Endothelial cell of umbilical vein (primary cell): ENCODE measurements at regions of chr12 and their contacts with region 1.

Region 1: DNA sequence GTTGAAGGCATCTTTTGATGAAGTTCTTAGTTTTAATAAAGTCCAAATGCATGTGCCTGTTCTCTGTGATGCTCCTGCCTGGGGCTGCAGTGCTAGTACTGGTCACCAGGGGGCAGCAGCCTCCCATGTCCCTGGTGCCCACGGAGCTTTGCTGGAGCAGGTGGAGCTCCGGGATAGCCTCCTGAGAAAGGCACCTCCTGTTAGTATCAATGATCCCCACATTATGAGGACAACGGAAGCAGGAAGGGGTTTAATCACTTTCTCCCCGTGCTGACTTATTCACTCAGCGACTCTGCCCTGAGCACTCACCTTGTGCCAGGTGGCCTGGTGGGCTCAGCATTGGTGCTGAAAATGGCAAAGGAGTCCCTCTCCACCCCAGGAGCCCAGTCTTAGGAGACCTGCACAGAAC is 123.0 kb upstream of the PZP start:
- DNase-seq: peak; percentile 53
- H3K4me3 ChIP-seq: no peak overlapping the region
- H3K27ac ChIP-seq: no peak overlapping the region
- H3K4me1 ChIP-seq: no peaks in the 10 kb centered on the region
- H3K27me3 ChIP-seq: no peaks in the 10 kb centered on the region
- CTCF ChIP-seq: peak; percentile 94 to 95
- POLR2A ChIP-seq: no peak

Region 2: DNA sequence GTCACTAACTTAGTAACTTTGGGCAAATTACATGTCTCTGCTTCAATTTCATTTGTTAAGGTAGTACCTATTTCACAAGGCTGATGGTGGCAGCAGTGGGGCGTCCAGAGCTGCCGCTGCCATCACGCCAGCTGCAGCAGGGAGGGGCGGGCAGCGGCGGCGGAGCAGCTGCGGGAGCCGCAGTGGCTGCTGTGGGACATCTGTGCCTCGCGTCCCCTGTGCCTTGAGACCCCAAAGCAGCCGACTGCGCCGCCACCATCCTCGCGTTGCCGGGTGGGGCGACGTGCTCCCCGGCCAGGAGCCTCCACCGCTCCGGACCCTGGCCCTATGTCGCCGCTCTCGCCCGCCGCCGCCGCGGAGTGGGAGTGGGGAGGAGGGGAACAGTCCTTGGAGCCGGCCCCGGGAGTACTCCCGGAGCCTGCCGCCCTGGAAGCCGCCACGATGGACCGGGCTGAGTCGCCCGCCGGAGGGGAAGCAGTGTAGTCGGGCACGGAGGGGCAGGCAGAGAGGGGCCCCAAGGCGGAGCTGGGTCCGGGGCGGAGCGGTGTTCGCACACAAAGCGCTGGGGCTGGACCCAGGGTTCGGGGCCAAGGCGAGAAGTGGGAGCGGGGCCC is 266.9 kb before region 1 on chr12:
- CTCF ChIA-PET with region 1: interaction called, 14 read pairs
- POLR2A ChIA-PET with region 1: no interaction called
- dilution Hi-C with region 1: no loop called
- intact Hi-C with region 1: no loop called
- DNase-seq: peak; percentile 83
- H3K4me3 ChIP-seq: peak overlapping the region; percentile 69 to 95 (median 76)
- H3K27ac ChIP-seq: peak overlapping the region; percentile 57
- H3K4me1 ChIP-seq: peaks cover 4% of the 10 kb centered on the region
- H3K27me3 ChIP-seq: peaks cover 4 to 6% of the 10 kb centered on the region in 2 experiments
- CTCF ChIP-seq: peak; percentile 32 to 57
- POLR2A ChIP-seq: no peak

Region 3: GRCh38 chr12:9260931-9261330 is 70.3 kb before region 1 on chr12:
- CTCF ChIA-PET with region 1: no interaction called
- POLR2A ChIA-PET with region 1: no interaction called
- dilution Hi-C with region 1: no loop called
- intact Hi-C with region 1: no loop called
- DNase-seq: no peak
- H3K4me3 ChIP-seq: no peak overlapping the region
- H3K27ac ChIP-seq: no peak overlapping the region
- H3K4me1 ChIP-seq: no peaks in the 10 kb centered on the region
- H3K27me3 ChIP-seq: peaks cover 5 to 13% of the 10 kb centered on the region in 2 experiments
- CTCF ChIP-seq: no peak
- POLR2A ChIP-seq: no peak

Region 4: DNA sequence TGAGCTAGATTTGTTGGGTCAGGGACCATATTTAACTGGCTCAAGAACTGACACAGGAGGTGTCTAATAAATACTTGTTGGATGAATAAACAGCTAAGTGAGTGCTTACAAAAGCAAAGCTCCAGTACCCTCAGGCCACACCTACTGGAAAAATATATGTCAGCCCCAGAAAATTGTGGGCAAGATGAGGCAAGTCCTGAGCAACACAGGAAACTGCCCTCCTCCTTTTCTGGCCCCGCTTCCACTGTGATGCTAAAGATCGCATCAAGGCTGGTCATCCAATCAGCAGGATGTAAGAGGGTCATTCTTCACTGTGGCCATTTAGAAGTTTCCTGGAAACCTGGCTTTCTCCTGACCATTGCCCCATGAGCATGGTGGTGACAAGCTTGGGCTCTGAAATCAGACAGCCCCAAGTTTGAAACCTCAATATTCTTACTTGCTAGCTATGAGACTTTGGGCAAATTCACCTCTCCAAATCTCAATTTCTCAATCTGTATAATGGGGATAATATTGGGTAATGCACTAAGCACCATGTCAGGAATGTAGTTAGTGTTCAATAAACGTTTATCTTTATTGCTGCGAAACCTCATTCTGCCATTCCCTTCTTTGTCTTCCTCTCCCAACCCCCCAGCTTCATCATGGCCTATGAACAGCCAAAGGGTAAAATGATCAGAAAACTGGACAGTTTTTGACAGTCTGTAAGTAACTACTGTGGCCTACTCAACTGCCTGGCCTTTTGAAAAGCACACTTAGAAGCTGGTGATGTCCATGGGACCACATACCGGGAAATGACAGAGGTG is 16.3 kb after region 1 on chr12:
- CTCF ChIA-PET with region 1: interaction called, 21 read pairs
- POLR2A ChIA-PET with region 1: no interaction called
- dilution Hi-C with region 1: no loop called
- intact Hi-C with region 1: no loop called
- DNase-seq: no peak
- H3K4me3 ChIP-seq: no peak overlapping the region
- H3K27ac ChIP-seq: no peak overlapping the region
- H3K4me1 ChIP-seq: no peaks in the 10 kb centered on the region
- H3K27me3 ChIP-seq: peaks cover 2 to 7% of the 10 kb centered on the region in 2 experiments
- CTCF ChIP-seq: no peak
- POLR2A ChIP-seq: no peak

Region 5: GRCh38 chr12:9372202-9372601 is 41.0 kb after region 1 on chr12:
- CTCF ChIA-PET with region 1: interaction called, 11 read pairs
- POLR2A ChIA-PET with region 1: no interaction called
- dilution Hi-C with region 1: no loop called
- intact Hi-C with region 1: no loop called
- DNase-seq: peak; percentile 18
- H3K4me3 ChIP-seq: no peak overlapping the region
- H3K27ac ChIP-seq: no peak overlapping the region
- H3K4me1 ChIP-seq: no peaks in the 10 kb centered on the region
- H3K27me3 ChIP-seq: peaks cover 0 to 16% of the 10 kb centered on the region in 2 experiments
- CTCF ChIP-seq: peak in 1 of 2 donors; percentile 8
- POLR2A ChIP-seq: no peak

Region 6: DNA sequence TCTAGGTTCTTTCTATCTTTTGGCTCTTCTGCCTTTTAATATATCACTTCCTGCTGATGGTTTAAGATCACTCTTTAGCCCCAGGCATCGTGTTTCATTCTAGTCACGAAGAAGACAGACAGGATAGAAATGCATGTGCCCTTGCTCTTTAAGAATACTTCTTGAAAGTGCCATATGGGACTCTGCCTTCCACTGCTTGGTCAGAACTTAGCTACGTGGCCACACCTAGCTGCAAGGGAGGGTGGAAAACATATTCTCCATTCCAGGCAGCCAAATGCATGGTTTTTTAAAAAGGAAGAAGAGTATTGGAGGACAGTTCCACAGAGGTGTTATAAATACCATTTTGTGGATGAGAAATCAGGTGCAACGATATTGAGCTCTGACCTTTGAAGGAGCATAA is 133.2 kb after region 1 on chr12:
- CTCF ChIA-PET with region 1: interaction called, 106 read pairs
- POLR2A ChIA-PET with region 1: no interaction called
- dilution Hi-C with region 1: no loop called
- intact Hi-C with region 1: loop called (anchors 1 kb)
- DNase-seq: no peak
- H3K4me3 ChIP-seq: no peak overlapping the region
- H3K27ac ChIP-seq: no peak overlapping the region
- H3K4me1 ChIP-seq: no peaks in the 10 kb centered on the region
- H3K27me3 ChIP-seq: no peaks in the 10 kb centered on the region
- CTCF ChIP-seq: no peak
- POLR2A ChIP-seq: no peak

Region 7: GRCh38 chr12:9615420-9616136 is 284.4 kb after region 1 on chr12:
- CTCF ChIA-PET with region 1: no interaction called
- POLR2A ChIA-PET with region 1: no interaction called
- dilution Hi-C with region 1: no loop called
- intact Hi-C with region 1: loop called (anchors 5 kb)
- DNase-seq: no peak
- H3K4me3 ChIP-seq: no peak overlapping the region
- H3K27ac ChIP-seq: no peak overlapping the region
- H3K4me1 ChIP-seq: no peaks in the 10 kb centered on the region
- H3K27me3 ChIP-seq: no peaks in the 10 kb centered on the region
- CTCF ChIP-seq: no peak
- POLR2A ChIP-seq: no peak